Left ventricle myocardium superior (tissue), 1 donor: ENCODE measurements at regions of chr2 and their contacts with region 1.

Region 1: DNA sequence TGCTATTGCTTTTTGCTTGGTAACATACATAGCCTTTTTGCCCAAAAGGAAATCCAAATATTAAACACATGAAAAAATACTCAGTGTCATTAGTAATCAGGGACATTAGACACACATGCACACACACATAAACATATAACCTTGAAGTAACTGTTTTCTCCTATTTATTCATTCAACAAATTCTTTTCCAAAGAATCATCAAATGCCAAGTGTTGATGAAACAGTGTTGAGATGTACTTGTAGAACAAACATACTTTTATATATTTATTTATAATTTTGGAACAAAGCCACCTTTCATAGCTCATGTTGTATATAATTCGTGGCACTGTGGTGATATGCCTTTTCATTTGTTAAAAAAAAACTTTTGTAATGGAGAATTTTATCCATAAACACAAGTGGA is 81.0 kb downstream of the APLF start:
- DNase-seq: no peak
- ATAC-seq: no peak

Region 2: DNA sequence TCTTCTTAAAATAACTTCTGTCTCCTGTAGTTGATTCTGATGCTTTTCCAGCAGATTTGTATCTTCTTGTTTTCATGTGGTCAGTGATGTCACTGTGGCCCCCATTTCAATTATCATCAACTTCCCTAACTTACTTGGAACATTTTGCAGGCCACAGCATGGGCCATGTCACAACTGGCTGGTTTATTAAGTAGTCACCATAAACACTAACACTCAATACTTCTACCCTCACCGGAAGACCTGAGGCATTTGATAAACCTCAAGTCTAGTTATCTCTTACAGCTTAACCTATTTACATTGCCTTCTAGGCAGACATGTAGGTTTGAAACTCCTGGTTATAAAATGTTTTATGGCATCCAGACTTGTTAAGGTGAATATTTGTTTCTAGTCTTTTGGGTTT is 57.5 kb after region 1 on chr2:
- intact Hi-C with region 1: loop called (anchors 10 kb)
- DNase-seq: no peak
- ATAC-seq: no peak